ENCODE measurements at regions of chr6 and their contacts with region 1.

Region 1: DNA sequence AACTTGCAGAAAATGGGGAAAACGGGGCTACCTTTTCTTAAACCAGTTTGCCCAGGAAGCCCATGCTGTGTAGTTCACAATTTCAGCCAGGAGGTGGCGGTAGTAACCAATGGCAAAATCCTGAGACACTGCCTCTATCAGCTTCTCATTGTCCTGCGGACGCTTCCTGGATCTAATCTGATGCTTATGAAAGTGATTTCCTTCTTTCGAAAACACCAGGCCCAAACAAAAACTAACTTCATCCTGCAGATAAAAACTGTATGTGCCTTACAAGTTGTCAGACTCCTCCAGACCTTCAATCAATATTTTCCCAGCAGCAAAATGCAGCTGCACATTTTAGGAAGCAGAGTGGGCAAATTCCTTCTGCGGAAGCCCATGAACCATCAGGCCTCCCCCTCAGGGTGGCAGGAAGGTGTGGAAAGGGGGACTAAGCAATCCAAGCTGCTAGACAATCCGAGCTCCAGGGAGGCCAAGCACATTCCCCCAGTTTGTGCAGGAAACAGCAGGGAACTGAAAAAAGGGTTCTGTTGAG is 88.5 kb downstream of the LY86 start:
- DNase-seq: peak; percentile 82
- ATAC-seq: peak; percentile 90
- H3K4me3 ChIP-seq: no peak overlapping the region
- H3K4me3 Mint-ChIP-seq: no peak overlapping the region
- H3K27ac ChIP-seq: no peak overlapping the region
- H3K27ac Mint-ChIP-seq: no peak overlapping the region
- H3K4me1 ChIP-seq: peaks cover 5 to 7% of the 10 kb centered on the region in 2 donors
- H3K4me1 Mint-ChIP-seq: peaks cover 9% of the 10 kb centered on the region
- H3K27me3 ChIP-seq: no peaks in the 10 kb centered on the region
- H3K27me3 Mint-ChIP-seq: peaks cover 5% of the 10 kb centered on the region
- CTCF ChIP-seq: peak; percentile 98

Region 2: GRCh38 chr6:6661684-6662083 is 15.3 kb before region 1 on chr6:
- CTCF ChIA-PET with region 1: interaction called, 35 read pairs
- POLR2A ChIA-PET with region 1: no interaction called
- intact Hi-C with region 1: no loop called
- DNase-seq: no peak
- ATAC-seq: no peak
- H3K4me3 ChIP-seq: no peak overlapping the region
- H3K4me3 Mint-ChIP-seq: no peak overlapping the region
- H3K27ac ChIP-seq: no peak overlapping the region
- H3K27ac Mint-ChIP-seq: no peak overlapping the region
- H3K4me1 ChIP-seq: peaks cover 28 to 33% of the 10 kb centered on the region in 2 donors
- H3K4me1 Mint-ChIP-seq: peaks cover 32% of the 10 kb centered on the region
- H3K27me3 ChIP-seq: no peaks in the 10 kb centered on the region
- H3K27me3 Mint-ChIP-seq: peaks cover 3% of the 10 kb centered on the region
- CTCF ChIP-seq: no peak

Region 3: DNA sequence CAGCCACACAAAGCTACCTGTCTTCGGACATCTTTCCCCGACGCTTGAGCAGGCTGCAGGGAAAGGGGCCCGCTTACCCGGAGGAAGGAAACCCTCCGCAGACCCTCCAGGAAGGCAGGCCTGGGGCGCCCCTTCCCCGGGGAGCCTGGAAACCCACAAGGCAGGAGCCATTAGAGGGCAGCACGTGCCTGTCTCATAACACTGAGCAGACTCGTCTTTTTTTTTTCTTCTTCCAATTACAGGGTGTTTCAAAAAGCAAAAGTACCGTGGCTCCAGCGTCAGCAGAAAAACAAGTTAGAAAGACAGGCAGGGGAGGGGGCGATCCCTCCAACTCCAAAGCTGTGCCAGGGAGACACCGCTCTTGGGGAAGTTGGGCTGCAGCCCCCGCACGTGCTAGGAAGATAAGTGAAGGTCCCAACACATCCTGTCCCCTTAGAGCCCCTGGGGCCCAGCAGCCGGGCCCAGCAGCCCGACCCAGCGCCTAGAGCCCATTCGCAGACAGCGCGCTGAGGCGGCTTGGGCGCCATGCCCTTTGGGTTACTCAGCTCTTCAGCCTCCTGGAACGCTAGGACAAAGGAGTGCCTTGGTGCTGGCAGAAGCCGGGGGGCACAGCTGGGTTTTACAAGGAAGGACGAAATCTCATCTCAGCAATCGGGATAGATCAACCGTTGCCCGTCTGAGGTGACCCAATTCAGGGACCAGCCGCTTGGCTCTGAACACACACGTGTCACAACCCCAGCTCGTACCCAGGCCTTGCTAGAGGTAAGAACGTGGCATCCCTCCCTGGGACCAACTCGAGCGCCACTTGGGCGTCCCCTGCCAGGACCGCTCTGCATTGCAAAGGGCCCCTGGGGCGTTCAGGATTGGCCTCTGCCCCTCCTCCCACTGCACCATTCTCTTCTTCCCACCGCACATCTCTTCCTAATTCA is 47.8 kb after region 1 on chr6:
- CTCF ChIA-PET with region 1: interaction called, 11 read pairs
- POLR2A ChIA-PET with region 1: no interaction called
- intact Hi-C with region 1: no loop called
- DNase-seq: peak; percentile 70
- ATAC-seq: peak; percentile 77
- H3K4me3 ChIP-seq: peak overlapping the region in 4 of 5 experiments; percentile 6 to 56 (median 25)
- H3K4me3 Mint-ChIP-seq: peak overlapping the region; percentile 55
- H3K27ac ChIP-seq: no peak overlapping the region
- H3K27ac Mint-ChIP-seq: no peak overlapping the region
- H3K4me1 ChIP-seq: peaks cover 11 to 18% of the 10 kb centered on the region in 2 donors
- H3K4me1 Mint-ChIP-seq: peaks cover 9% of the 10 kb centered on the region
- H3K27me3 ChIP-seq: peaks cover 0 to 23% (median 12%) of the 10 kb centered on the region in 4 experiments
- H3K27me3 Mint-ChIP-seq: peaks cover 33% of the 10 kb centered on the region
- CTCF ChIP-seq: peak; percentile 67

Region 4: GRCh38 chr6:6758915-6759654 is 82.1 kb after region 1 on chr6:
- CTCF ChIA-PET with region 1: interaction called, 10 read pairs
- POLR2A ChIA-PET with region 1: no interaction called
- intact Hi-C with region 1: loop called (anchors 2 kb)
- DNase-seq: peak; percentile 76
- ATAC-seq: peak; percentile 85
- H3K4me3 ChIP-seq: no peak overlapping the region
- H3K4me3 Mint-ChIP-seq: no peak overlapping the region
- H3K27ac ChIP-seq: no peak overlapping the region
- H3K27ac Mint-ChIP-seq: peak overlapping the region; percentile 29
- H3K4me1 ChIP-seq: peaks cover 13 to 16% of the 10 kb centered on the region in 2 donors
- H3K4me1 Mint-ChIP-seq: peaks cover 17% of the 10 kb centered on the region
- H3K27me3 ChIP-seq: peaks cover 0 to 5% (median 0%) of the 10 kb centered on the region in 4 experiments
- H3K27me3 Mint-ChIP-seq: peaks cover 10% of the 10 kb centered on the region
- CTCF ChIP-seq: peak; percentile 77

Region 5: DNA sequence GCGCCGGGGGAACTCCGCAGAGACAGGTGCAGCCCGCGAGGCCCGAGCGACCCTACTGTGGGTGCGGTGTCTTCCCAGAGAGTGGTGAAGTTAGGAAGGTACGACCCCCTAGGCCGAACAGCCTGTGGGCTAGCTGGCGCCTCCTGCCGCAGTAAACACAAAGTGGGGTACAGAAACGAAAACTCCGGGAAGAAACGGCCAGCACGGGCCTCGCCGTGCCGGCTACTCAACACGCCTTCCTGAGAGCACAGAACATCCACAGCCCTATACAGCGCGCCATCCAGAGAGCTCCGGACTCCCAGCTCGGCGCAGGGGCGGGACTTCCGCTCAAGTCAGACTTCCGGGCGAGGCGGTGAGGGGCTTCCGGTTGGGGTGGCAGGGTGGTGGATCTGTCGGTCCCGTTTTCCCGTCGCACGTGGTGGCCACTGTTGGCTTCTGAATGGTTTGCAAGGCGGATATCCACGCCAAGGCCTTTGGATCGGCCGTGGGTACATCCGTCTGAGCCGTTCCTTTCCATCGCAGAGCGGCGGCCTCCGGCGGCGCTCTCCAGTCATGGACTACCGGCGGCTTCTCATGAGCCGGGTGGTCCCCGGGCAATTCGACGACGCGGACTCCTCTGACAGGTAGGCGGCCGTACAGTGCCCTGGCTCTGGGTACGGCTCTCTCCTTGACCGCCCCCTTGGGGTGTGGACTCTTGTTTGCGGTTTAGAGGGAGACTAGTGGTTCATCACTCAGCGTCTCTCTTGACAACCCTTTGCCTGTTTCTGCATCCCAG is 712.7 kb after region 1 on chr6 and contains the starts of genes CAGE1 and RIOK1:
- CTCF ChIA-PET with region 1: no interaction called
- POLR2A ChIA-PET with region 1: no interaction called
- intact Hi-C with region 1: loop called (anchors 1 kb)
- DNase-seq: peak; percentile 98
- ATAC-seq: peak; percentile 89
- H3K4me3 ChIP-seq: peak within 1 kb of the TSS; percentile 83 to 96 (median 85)
- H3K4me3 Mint-ChIP-seq: peak within 1 kb of the TSS; percentile 96
- H3K27ac ChIP-seq: peak within 1 kb of the TSS; percentile 96 to 100
- H3K27ac Mint-ChIP-seq: peak within 1 kb of the TSS; percentile 99
- H3K4me1 ChIP-seq: peaks cover 18 to 26% of the 10 kb centered on the region in 2 donors
- H3K4me1 Mint-ChIP-seq: peaks cover 34% of the 10 kb centered on the region
- H3K27me3 ChIP-seq: no peaks in the 10 kb centered on the region
- H3K27me3 Mint-ChIP-seq: no peaks in the 10 kb centered on the region
- CTCF ChIP-seq: no peak
- total RNA-seq, gene CAGE1: 0.32 and 0.34 TPM in 2 replicates
- total RNA-seq, gene RIOK1: 25.9 and 32.1 TPM in 2 replicates

Region 6: DNA sequence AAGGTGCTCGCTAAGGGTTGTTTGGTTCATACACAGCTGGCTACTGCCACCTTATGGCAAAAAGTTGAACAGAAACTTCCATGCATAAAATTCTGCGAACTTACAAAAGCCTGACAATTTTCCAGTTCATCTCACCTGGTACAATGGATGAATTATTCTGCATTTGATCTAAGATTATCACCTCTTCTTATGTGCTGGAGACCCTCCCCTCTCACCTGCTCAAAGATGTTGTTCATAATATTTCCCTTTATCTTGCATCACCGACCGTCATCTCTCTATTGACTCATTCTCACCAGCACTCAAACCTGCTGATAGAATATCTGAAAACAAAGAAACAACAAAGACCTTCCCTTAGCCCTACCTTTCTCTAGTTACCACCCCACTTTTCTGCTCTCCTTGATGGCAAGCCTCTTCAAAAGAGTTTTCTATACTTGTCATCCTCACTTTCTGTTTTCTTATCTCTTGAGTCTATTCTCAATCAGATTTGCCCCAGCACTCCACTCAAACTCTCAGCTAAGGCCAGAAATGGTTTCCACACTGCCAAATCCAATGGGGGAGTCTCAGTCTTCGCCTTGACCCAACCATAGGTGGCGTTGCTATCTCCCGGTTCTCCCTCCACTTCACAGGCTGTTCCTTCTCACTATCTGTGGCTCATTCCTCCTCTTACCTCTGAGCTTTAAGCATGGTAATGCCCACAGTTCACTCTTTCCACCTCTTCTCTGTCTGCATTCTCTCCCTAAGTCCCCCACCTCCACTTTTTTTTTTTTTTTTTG is 938.8 kb after region 1 on chr6:
- CTCF ChIA-PET with region 1: interaction called, 19 read pairs
- POLR2A ChIA-PET with region 1: no interaction called
- intact Hi-C with region 1: no loop called
- DNase-seq: peak; percentile 68
- ATAC-seq: peak; percentile 41
- H3K4me3 ChIP-seq: no peak overlapping the region
- H3K4me3 Mint-ChIP-seq: peak overlapping the region; percentile 3
- H3K27ac ChIP-seq: no peak overlapping the region
- H3K27ac Mint-ChIP-seq: no peak overlapping the region
- H3K4me1 ChIP-seq: peaks cover 0 to 15% of the 10 kb centered on the region in 2 donors
- H3K4me1 Mint-ChIP-seq: peaks cover 5% of the 10 kb centered on the region
- H3K27me3 ChIP-seq: peaks cover 0 to 5% (median 0%) of the 10 kb centered on the region in 4 experiments
- H3K27me3 Mint-ChIP-seq: peaks cover 4% of the 10 kb centered on the region
- CTCF ChIP-seq: peak; percentile 87